ENCODE measurements at regions of chr10 and their contacts with region 1.

Region 1: GRCh38 chr10:89940076-89940475 is 238.7 kb downstream of the KIF20B start:
- DNase-seq: no peak

Region 2: DNA sequence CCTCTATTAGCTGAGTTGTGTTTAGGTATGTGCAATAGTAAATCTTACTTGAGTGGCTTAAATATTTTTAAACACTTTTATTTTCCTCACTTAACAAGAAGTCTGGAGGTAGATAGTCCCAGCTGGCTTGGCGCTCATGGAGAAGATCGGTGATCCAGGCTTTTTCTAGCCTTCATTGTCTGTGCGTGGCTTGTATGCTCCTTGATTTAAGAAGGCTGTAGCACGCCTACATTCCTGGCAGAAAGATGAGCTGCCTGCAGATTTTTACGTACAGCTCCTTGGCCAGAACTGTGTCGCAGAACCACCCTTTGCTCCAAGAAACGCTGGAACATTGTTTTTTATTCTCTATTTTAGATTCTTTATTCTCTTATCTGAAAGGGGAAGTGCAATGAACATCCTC is 45.4 kb after region 1 on chr10:
- intact Hi-C with region 1: loop called in 1 of 2 experiments (anchors 2 kb)
- DNase-seq: no peak